IMR-90 (cell line): ENCODE measurements at regions of chr9 and their contacts with region 1.

Region 1: GRCh38 chr9:97938081-97938644 is at the start of gene HEMGN:
- DNase-seq: no peak
- ATAC-seq: no peak
- H3K4me3 ChIP-seq: no peak within 1 kb of the TSS
- H3K27ac ChIP-seq: no peak within 1 kb of the TSS
- H3K4me1 ChIP-seq: no peaks in the 10 kb centered on the region
- H3K27me3 ChIP-seq: peaks cover 64% of the 10 kb centered on the region
- CTCF ChIP-seq: no peak
- POLR2A ChIP-seq: no peak
- RAD21 ChIP-seq: no peak
- total RNA-seq, gene HEMGN: not detected in 2 replicates

Region 2: GRCh38 chr9:97970165-97970564 is 32.0 kb after region 1 on chr9:
- CTCF ChIA-PET with region 1: no interaction called
- POLR2A ChIA-PET with region 1: no interaction called
- dilution Hi-C with region 1: no loop called
- in situ Hi-C with region 1: no loop called
- intact Hi-C with region 1: loop called (anchors 5 kb)
- DNase-seq: no peak
- ATAC-seq: no peak
- H3K4me3 ChIP-seq: no peak overlapping the region
- H3K27ac ChIP-seq: no peak overlapping the region
- H3K4me1 ChIP-seq: no peaks in the 10 kb centered on the region
- H3K27me3 ChIP-seq: peaks cover 26% of the 10 kb centered on the region
- CTCF ChIP-seq: no peak
- POLR2A ChIP-seq: no peak
- RAD21 ChIP-seq: no peak

Region 3: DNA sequence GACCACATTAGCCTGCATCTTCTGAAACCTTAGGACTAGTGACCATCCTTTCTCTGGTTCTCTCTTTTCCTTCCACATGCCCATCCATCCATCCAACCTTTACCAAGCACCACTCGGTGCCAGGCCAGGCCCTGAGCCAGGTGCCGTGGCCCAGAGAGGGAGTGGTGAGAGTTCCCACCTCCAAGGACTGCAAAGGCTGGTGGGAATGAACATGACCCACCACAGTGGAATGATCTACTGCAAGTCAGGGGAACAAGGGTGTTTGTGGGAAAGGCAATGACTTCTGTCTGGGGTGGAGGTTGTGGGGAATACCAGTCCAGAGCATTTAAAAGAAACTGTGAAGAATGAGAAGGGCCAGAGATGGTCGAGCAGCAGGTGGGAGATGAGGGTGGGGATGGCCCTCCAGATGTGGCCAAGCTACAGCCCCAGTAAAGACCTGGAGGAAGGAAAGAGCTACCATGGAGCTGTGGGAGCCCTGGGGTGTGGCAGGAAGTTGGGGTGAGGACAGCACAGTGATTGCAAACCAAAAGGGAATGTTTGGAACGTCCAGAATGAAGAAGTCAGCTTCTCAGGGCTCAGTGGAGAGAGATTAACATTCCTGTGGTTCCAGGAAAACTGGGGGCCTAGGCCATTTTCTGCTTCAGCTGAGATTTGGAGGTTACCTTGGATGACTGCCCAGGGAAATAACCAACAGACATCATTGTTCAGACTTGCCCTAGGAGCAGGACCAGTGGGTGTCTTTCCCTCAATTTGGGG is 284.9 kb after region 1 on chr9:
- CTCF ChIA-PET with region 1: no interaction called
- POLR2A ChIA-PET with region 1: interaction called, 10 read pairs
- dilution Hi-C with region 1: no loop called
- in situ Hi-C with region 1: no loop called
- intact Hi-C with region 1: no loop called
- DNase-seq: peak; percentile 99
- ATAC-seq: peak; percentile 94
- H3K4me3 ChIP-seq: no peak overlapping the region
- H3K27ac ChIP-seq: peak overlapping the region; percentile 98
- H3K4me1 ChIP-seq: peaks cover 37% of the 10 kb centered on the region
- H3K27me3 ChIP-seq: no peaks in the 10 kb centered on the region
- CTCF ChIP-seq: no peak
- POLR2A ChIP-seq: no peak
- RAD21 ChIP-seq: no peak